ENCODE measurements at regions of chr6 and their contacts with region 1.

Region 1: GRCh38 chr6:35468181-35468979 is at the start of gene RPL10A:
- DNase-seq: peak; percentile 97
- H3K4me3 ChIP-seq: peak within 1 kb of the TSS; percentile 67 to 90
- H3K27ac ChIP-seq: peak within 1 kb of the TSS; percentile 85 to 89
- H3K4me1 ChIP-seq: peaks cover 23 to 26% of the 10 kb centered on the region in 2 experiments; a peak in 3 of 4 replicates
- H3K27me3 ChIP-seq: no peaks in the 10 kb centered on the region
- CTCF ChIP-seq: peak; percentile 96
- EP300 ChIP-seq: no peak
- RAD21 ChIP-seq: peak; percentile 77
- polyA plus RNA-seq, gene RPL10A: 2,393 and 3,548 TPM in 2 replicates

Region 2: DNA sequence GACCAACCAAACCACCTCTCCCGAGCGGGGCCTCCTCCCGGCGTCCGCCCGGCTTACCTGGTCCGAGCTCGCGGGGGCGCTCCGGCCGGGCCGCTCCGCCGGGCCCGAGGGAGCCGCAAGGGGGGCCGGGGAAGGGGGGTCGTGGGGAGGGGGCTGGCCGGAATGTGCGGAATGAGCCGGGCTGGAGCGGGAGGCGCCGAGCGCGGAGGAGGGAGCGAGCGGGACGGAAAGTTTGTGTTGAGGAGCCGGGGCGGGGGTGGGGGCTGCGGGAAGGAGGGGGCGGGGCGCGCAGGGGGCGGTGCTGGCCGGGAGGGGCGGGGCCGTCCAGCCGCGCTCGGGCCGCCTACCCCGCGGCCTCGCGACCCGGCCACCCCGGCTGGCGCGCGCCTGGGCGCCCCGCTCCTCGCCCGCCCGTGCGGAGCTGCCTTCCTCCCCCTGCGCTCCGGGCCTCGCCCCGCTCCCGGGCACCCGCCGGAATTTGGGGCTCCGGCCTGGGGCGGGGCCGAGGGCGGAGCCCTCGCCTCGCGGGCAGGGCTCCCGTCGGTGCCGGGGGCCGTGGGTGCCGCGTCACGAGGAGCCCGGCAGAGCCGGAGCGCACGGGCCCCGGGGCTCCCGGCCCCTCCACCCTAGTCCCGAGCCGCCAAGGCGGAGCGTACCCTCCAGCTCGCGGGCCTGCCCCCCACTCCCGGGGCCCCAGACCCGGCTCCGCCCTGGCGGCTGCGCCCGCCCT is 28.6 kb after region 1 on chr6 and contains the start of gene TEAD3:
- CTCF ChIA-PET with region 1: interaction called, 13 read pairs
- POLR2A ChIA-PET with region 1: interaction called, 8 read pairs
- DNase-seq: peak; percentile 97
- H3K4me3 ChIP-seq: peak within 1 kb of the TSS; percentile 66 to 79
- H3K27ac ChIP-seq: peak within 1 kb of the TSS; percentile 35 to 82; a peak in 3 of 4 replicates
- H3K4me1 ChIP-seq: peaks cover 12 to 50% of the 10 kb centered on the region in 2 experiments; a peak in 2 of 4 replicates
- H3K27me3 ChIP-seq: no peaks in the 10 kb centered on the region
- CTCF ChIP-seq: peak; percentile 27
- EP300 ChIP-seq: no peak
- RAD21 ChIP-seq: no peak
- polyA plus RNA-seq, gene TEAD3: 5.2 and 7.1 TPM in 2 replicates

Region 3: GRCh38 chr6:35737413-35738211 is 269.2 kb after region 1 on chr6:
- CTCF ChIA-PET with region 1: interaction called, 10 read pairs
- POLR2A ChIA-PET with region 1: no interaction called
- DNase-seq: peak; percentile 79
- H3K4me3 ChIP-seq: no peak overlapping the region
- H3K27ac ChIP-seq: peak overlapping the region in 1 of 2 experiments; percentile 14; a peak in 1 of 4 replicates
- H3K4me1 ChIP-seq: peaks cover 2 to 11% of the 10 kb centered on the region in 2 experiments; a peak in 1 of 4 replicates
- H3K27me3 ChIP-seq: no peaks in the 10 kb centered on the region
- CTCF ChIP-seq: peak; percentile 82
- EP300 ChIP-seq: no peak
- RAD21 ChIP-seq: peak; percentile 93

Measured in SK-N-SH (cell line).